Colonic mucosa (tissue), 4 donors: ENCODE measurements at regions of chr4 and their contacts with region 1.

Region 1: DNA sequence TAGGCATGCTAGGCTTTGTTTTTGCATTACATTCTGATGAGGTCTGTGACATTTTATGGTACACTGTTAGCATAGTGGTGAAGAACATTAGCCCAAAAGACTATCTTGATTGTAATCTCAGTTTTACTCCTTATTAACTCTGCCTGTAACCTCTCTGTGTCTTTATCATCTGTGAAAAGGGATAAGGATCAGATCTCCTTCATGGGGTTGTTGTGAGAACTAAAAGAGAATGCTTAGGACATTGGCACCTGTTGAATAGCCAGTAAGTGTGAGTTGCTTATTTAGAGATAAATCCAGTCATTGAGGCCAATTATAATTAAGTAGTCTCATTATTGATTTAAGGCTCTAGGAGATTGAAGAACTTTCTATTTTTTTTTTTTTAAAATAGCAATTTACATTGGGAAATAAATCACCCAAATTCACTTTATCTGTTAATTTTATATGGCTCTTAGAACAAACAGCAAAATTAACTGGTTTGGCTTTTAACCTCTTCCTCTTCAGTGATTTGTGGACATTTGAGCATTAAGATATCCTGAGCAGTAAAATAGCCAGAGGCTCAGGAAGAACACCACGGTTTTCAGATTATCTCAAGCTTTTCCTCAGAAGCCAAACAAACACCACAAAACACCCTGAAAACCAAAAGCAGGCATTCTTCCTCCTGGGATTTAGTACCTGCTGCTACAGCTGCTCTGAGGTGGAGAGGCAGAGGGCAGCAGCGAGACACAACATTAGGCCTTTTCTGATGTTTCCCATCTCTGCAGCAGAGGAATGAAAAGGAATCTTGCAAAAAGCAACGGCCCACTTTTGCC is 192.9 kb downstream of the ARHGAP10 start:
- DNase-seq: peak; percentile 42
- H3K4me3 ChIP-seq: no peak overlapping the region
- H3K27ac ChIP-seq: no peak overlapping the region
- H3K4me1 ChIP-seq: no peaks in the 10 kb centered on the region
- H3K27me3 ChIP-seq: no peaks in the 10 kb centered on the region
- CTCF ChIP-seq: peak; percentile 31

Region 2: DNA sequence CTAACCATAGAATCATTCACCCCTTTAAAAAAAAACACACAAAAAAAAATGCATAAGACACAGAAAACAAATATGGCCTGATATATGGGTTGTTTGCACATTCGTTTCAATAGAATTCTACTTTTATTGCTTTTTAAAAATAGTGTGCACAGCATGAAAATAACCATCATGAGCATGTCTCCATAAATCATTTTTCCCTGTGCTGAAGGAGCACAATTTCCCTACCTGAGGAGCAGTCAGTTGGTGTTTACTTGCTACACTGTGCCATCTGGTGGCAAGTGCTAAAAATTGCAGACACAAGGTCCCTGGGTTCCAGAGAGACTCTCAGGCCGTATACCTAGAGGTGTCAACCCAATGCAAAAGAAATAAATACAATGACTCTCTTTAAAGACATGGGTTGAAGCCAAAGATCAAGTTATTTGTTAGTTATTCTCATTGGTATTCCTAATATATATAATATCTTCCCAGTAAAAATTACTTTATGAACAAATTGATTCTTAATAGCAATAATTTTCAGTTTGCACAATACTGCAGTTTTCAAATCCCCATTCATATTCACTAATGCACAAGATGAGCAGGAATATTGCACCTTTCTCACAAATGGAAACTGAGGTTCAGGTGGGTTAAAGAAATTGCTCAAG is 1339.4 kb after region 1 on chr4:
- intact Hi-C with region 1: loop called (anchors 10 kb)
- DNase-seq: peak; percentile 41
- H3K4me3 ChIP-seq: no peak overlapping the region
- H3K27ac ChIP-seq: no peak overlapping the region
- H3K4me1 ChIP-seq: no peaks in the 10 kb centered on the region
- H3K27me3 ChIP-seq: no peaks in the 10 kb centered on the region
- CTCF ChIP-seq: peak; percentile 70